Posterior vena cava (tissue), 2 donors: ENCODE measurements at regions of chr11 and their contacts with region 1.

Region 1: GRCh38 chr11:3380706-3381545 is 2.0 kb upstream of the ZNF195 start:
- DNase-seq: no peak

Region 2: DNA sequence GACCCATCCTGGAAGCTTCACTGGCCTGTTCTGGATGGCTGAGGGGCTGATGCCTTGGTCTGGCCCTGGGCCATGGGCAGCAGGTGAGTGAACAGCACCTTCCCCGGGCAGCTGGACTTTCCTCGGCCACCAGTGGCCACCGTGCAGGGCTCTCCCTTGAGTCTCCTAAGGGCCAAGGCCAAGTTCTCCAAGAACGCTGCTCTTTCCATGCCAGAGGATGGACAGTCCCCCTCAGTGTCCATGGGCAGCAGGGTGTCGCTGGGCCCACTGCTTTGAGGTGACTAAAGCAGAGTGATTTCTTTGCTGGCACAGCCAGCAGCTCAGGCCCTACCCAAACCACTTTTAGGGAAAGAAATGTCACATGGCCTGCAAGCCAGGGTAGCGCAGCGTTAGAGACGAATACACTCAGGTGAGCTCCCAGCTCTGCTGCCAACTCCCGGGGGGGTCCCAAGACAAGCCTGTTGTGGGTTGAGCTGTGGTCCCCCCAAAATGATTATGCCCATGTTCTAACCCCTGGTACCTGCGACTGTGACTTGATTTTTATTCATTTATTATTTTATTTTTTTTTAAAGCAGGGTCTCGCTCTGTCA is 320.4 kb before region 1 on chr11:
- intact Hi-C with region 1: no loop called
- DNase-seq: peak; percentile 58

Region 3: GRCh38 chr11:3412837-3413236 is 31.9 kb after region 1 on chr11:
- intact Hi-C with region 1: loop called in 1 of 2 experiments (anchors 5 kb)
- DNase-seq: peak; percentile 62